ENCODE measurements at regions of chr18 and their contacts with region 1.

Region 1: DNA sequence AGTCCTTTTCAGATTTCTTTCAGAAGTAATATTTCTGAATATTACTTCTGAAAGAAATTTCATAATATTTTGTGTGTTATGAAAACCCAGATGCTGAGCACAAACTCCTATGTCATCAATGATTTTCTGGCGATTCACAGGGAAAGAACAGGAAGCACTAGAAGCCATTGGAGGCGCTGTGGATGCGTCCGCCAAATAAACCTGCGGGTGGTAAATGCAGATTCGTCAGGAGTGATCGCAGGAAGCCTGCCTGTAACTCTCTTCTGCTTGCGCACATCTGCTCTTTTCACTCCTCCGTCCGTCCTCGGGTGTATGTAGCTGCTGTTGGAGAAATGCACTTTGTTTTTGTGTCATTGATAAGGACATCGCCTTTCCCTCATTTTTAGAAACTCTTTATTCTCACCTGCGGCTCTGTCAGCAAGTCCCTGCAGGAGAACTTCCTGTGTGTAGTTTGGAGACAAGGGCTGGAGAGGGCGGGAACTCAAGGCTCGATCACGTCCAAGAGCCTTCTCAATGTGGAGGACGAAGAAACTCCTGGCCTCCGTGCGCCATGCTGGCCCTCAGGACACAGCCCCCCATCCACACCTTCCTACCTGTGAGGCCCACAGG is 483.8 kb downstream of the GALR1 start:
- H3K4me3 ChIP-seq: no peak overlapping the region
- H3K27ac ChIP-seq: no peak overlapping the region
- H3K4me1 ChIP-seq: no peaks in the 10 kb centered on the region
- CTCF ChIP-seq: no peak

Region 2: DNA sequence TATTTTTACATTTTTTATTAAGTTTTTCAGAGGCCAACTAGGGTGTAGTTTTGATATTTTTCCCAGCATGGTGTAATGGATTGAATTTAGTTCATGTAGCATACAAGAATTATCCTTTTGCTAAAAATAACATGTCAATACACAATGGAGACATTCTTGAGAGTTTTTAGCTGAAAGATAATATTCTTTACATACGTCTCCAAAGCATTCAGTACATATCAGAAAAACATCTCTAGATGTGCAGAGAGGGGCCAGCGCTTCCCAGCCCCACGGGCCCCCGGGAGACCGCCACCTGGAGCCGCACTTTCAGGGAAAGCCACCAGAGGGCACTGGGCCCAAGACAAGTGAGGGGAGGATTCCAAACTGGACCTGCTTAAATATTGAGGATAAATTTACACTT is 15.7 kb after region 1 on chr18:
- CTCF ChIA-PET with region 1: interaction called, 11 read pairs
- POLR2A ChIA-PET with region 1: no interaction called
- H3K4me3 ChIP-seq: no peak overlapping the region
- H3K27ac ChIP-seq: no peak overlapping the region
- H3K4me1 ChIP-seq: no peaks in the 10 kb centered on the region
- CTCF ChIP-seq: no peak